Psoas muscle (tissue), 8 donors: ENCODE measurements at regions of chr9 and their contacts with region 1.

Region 1: GRCh38 chr9:83980395-83981125 is at the start of gene RMI1:
- DNase-seq: peak; percentile 100
- ATAC-seq: peak; percentile 90 to 93 (median 92)
- H3K4me3 ChIP-seq: peak within 1 kb of the TSS; percentile 96
- H3K27ac ChIP-seq: peak within 1 kb of the TSS; percentile 100
- H3K4me1 ChIP-seq: peaks cover 34% of the 10 kb centered on the region
- H3K27me3 ChIP-seq: no peaks in the 10 kb centered on the region
- CTCF ChIP-seq: no peak
- total RNA-seq, gene RMI1: 3.9 to 4.5 (median 4.1) TPM

Region 2: DNA sequence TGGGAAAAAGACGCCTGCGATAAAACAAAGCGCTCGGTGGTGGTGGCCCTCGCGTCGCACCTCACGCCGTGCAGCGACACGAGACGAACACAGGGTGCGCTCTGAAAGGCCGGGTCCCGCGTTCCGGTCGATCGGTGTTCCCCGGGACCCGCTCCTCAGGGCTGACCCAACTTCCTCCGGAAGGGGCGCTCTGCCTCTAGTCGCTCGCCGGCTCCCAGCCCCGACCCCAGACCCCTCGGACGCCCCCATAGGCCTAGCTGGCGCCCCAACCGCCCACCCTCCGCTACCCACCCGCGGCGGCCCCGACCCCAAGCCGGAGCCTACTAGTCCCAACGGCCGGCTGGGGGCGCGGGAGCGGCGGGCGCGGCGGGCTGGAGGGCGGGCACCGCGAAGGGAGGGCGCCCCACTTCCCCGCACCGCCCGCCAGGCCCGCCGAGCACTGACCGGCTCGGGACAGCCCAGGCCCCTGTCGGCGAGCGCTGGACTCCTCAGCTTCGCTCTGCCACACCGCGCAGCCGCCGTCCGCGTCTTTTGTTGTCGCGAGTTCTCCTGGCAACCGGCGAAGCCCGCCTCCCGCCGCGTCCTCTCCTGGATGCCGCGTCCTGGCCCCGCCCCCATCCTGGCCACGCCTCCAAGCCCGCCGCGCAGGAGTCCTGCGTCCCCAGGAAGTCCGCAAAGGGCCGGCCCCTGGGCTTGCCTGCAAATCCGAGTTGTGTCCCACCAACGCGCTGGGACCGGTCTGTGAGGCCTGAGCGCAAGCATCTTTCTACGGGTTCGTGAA is 59.4 kb before region 1 on chr9 and contains the start of gene KIF27:
- intact Hi-C with region 1: loop called in 1 of 2 experiments (anchors 2 kb)
- DNase-seq: peak; percentile 100
- ATAC-seq: peak; percentile 97 to 98 (median 98)
- H3K4me3 ChIP-seq: peak within 1 kb of the TSS; percentile 84
- H3K27ac ChIP-seq: peak within 1 kb of the TSS; percentile 88
- H3K4me1 ChIP-seq: peaks cover 6% of the 10 kb centered on the region
- H3K27me3 ChIP-seq: no peaks in the 10 kb centered on the region
- CTCF ChIP-seq: peak; percentile 41
- total RNA-seq, gene KIF27: 1.8 to 3.8 (median 2.7) TPM

Region 3: DNA sequence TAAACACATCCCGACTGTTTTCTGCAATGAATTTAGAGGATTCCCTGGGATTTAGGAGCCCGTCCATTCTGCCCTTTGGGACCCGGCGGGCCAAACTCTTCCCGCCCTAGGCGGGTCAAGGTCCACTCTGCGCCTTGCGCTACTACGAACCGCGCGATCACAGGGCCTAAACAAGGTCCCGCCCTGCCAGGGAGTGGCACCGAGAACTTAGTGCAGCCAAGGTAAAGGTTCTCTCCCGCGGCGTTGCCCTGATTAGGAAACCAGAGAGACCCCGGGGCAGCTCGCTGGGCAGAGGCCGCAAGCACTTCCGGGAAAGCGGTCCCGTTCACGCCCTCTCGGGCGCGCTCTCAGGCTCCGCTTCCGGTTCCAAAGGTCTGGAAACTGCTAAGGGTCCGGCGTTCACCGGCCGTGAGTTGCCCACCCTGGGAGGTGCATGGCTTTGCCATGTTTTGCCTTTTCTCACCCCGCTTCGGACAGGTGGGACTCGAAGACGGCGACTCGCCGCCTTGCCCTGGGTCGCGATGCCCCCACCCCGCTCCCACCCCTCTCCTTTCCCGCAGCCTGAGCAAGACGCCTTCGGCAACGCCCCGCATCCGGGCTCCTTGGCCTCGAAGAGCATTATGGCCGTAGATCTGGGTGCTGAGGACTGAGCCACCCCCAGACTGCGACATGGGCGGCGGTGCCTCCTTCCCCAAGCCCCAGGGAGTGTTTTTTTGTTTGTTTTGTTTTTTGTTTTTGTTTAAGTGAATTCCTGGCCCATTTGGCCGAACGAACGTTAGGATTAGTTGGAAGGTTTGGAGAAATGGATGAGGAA is 23.9 kb before region 1 on chr9:
- intact Hi-C with region 1: loop called in 1 of 2 experiments (anchors 2 kb)
- DNase-seq: peak; percentile 83 to 91
- ATAC-seq: peak; percentile 86 to 94 (median 92)
- H3K4me3 ChIP-seq: peak overlapping the region; percentile 71
- H3K27ac ChIP-seq: peak overlapping the region; percentile 80
- H3K4me1 ChIP-seq: no peaks in the 10 kb centered on the region
- H3K27me3 ChIP-seq: no peaks in the 10 kb centered on the region
- CTCF ChIP-seq: no peak

Region 4: GRCh38 chr9:84054341-84055010 is 73.9 kb after region 1 on chr9:
- intact Hi-C with region 1: loop called (anchors 5 kb)
- DNase-seq: peak in 1 of 2 donors; percentile 58
- ATAC-seq: peak; percentile 87 to 95 (median 92)
- H3K4me3 ChIP-seq: no peak overlapping the region
- H3K27ac ChIP-seq: peak overlapping the region; percentile 70
- H3K4me1 ChIP-seq: peaks cover 31% of the 10 kb centered on the region
- H3K27me3 ChIP-seq: no peaks in the 10 kb centered on the region
- CTCF ChIP-seq: no peak